ENCODE measurements at regions of chr17 and their contacts with region 1.

Region 1: DNA sequence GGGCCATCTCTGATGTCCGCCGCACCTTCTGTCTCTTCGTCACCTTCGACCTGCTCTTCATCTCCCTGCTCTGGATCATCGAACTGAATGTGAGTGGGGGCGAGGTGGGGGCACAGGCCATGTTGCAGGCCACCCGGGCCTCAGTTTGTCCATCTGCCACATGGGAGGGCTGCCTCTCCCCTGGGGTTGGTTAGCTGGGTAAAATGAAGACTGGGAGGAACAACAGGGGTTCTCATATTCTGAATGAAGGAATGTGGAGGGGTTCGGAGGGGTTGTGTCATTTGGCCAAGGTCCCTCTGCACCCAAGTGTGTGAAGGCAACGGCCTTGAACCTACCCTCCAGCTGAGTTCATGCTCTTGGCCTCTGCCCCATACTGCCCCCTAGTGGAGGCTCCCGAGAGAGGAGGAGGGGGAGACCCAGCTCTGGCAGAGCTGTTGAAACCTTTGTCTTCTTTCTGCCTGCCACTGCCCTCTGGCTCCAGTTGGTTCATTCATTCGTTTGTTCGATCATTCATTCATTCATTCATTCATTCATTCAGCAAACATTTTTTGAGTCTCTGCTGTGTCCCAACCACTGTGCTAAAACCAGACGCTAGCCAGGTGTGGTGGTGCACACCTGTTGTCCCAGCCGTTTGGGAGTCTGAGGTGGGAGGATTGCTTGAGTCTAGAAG is 11.4 kb upstream of the TCAP start:
- DNase-seq: no peak
- ATAC-seq: peak; percentile 98
- H3K4me3 ChIP-seq: no peak overlapping the region
- H3K27ac ChIP-seq: no peak overlapping the region
- H3K4me1 ChIP-seq: peaks cover 5% of the 10 kb centered on the region; the same call in 1 of the 2 replicates
- H3K27me3 ChIP-seq: no peaks in the 10 kb centered on the region
- CTCF ChIP-seq: peak; percentile 74 to 96 (median 96)
- EP300 ChIP-seq: no peak
- POLR2A ChIP-seq: no peak
- RAD21 ChIP-seq: peak; percentile 54

Region 2: GRCh38 chr17:39636927-39637736 is 16.7 kb before region 1 on chr17 and contains the start of gene STARD3:
- CTCF ChIA-PET with region 1: interaction called, 63 read pairs
- POLR2A ChIA-PET with region 1: no interaction called
- RAD21 ChIA-PET with region 1: no interaction called
- SMC1A ChIA-PET with region 1: interaction called, 3 read pairs
- in situ Hi-C with region 1: no loop called
- intact Hi-C with region 1: no loop called
- DNase-seq: no peak
- ATAC-seq: peak; percentile 97
- H3K4me3 ChIP-seq: peak within 1 kb of the TSS; percentile 100
- H3K27ac ChIP-seq: peak within 1 kb of the TSS; percentile 90
- H3K4me1 ChIP-seq: peaks cover 20% of the 10 kb centered on the region
- H3K27me3 ChIP-seq: no peaks in the 10 kb centered on the region
- CTCF ChIP-seq: peak in 1 of 3 experiments; percentile 12; a peak in 2 of 6 replicates
- EP300 ChIP-seq: no peak
- POLR2A ChIP-seq: peak; percentile 91
- RAD21 ChIP-seq: no peak
- polyA plus RNA-seq, gene STARD3: 0.08 to 1.4 TPM

Region 3: GRCh38 chr17:39643271-39643670 is 10.5 kb before region 1 on chr17:
- CTCF ChIA-PET with region 1: interaction called, 63 read pairs
- POLR2A ChIA-PET with region 1: no interaction called
- RAD21 ChIA-PET with region 1: no interaction called
- SMC1A ChIA-PET with region 1: interaction called, 4 read pairs
- in situ Hi-C with region 1: no loop called
- intact Hi-C with region 1: no loop called
- DNase-seq: no peak
- ATAC-seq: no peak
- H3K4me3 ChIP-seq: no peak overlapping the region
- H3K27ac ChIP-seq: no peak overlapping the region
- H3K4me1 ChIP-seq: peaks cover 11% of the 10 kb centered on the region
- H3K27me3 ChIP-seq: no peaks in the 10 kb centered on the region
- CTCF ChIP-seq: no peak
- EP300 ChIP-seq: no peak
- POLR2A ChIP-seq: no peak
- RAD21 ChIP-seq: no peak

Region 4: DNA sequence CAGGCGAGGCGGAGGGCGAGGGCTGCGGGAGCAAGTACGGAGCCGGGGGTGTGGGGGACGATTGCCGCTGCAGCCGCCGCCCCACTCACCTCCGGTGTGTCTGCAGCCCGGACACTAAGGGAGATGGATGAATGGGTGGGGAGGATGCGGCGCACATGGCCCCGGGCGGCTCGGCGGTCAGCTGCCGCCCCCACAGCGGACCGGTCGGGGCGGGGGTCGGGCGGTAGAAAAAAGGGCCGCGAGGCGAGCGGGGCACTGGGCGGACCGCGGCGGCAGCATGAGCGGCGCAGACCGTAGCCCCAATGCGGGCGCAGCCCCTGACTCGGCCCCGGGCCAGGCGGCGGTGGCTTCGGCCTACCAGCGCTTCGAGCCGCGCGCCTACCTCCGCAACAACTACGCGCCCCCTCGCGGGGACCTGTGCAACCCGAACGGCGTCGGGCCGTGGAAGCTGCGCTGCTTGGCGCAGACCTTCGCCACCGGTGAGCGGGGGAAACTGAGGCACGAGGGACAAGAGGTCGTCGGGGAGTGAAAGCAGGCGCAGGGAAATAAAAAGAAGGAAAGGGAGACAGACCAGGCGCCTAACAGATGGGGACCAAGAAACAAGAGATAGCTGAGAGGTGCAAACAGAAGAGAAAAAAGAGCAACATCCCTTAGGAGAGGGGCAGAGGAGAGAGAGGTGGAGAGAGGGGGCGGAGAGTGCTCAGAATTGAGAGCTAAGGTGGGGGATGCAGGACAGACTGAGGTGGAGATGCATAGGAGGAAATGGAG is 14.6 kb after region 1 on chr17 and contains the start of gene PNMT:
- CTCF ChIA-PET with region 1: interaction called, 64 read pairs
- POLR2A ChIA-PET with region 1: interaction called, 3 read pairs
- RAD21 ChIA-PET with region 1: interaction called, 7 read pairs
- SMC1A ChIA-PET with region 1: interaction called, 5 read pairs
- in situ Hi-C with region 1: no loop called
- intact Hi-C with region 1: no loop called
- DNase-seq: no peak
- ATAC-seq: peak; percentile 82
- H3K4me3 ChIP-seq: peak within 1 kb of the TSS; percentile 44; the same call in 1 of the 2 replicates
- H3K27ac ChIP-seq: no peak within 1 kb of the TSS
- H3K4me1 ChIP-seq: no peaks in the 10 kb centered on the region
- H3K27me3 ChIP-seq: peaks cover 4 to 6% of the 10 kb centered on the region in 2 experiments; a peak in 3 of 4 replicates
- CTCF ChIP-seq: peak; percentile 57 to 73 (median 62)
- EP300 ChIP-seq: no peak
- POLR2A ChIP-seq: no peak
- RAD21 ChIP-seq: 0 out of 2 replicates have a peak, but pooled peaks have one; percentile 17
- polyA plus RNA-seq, gene PNMT: not detected

Region 5: GRCh38 chr17:39676198-39676819 is 22.5 kb after region 1 on chr17:
- CTCF ChIA-PET with region 1: interaction called, 64 read pairs
- POLR2A ChIA-PET with region 1: interaction called, 3 read pairs
- RAD21 ChIA-PET with region 1: interaction called, 7 read pairs
- SMC1A ChIA-PET with region 1: interaction called, 5 read pairs
- in situ Hi-C with region 1: no loop called
- intact Hi-C with region 1: no loop called
- DNase-seq: peak; percentile 13
- ATAC-seq: peak; percentile 83
- H3K4me3 ChIP-seq: no peak overlapping the region
- H3K27ac ChIP-seq: no peak overlapping the region
- H3K4me1 ChIP-seq: peaks cover 44% of the 10 kb centered on the region
- H3K27me3 ChIP-seq: no peaks in the 10 kb centered on the region
- CTCF ChIP-seq: no peak
- EP300 ChIP-seq: 0 out of 4 replicates have a peak, but pooled peaks of 1 of the 2 experiments have one; percentile 32
- POLR2A ChIP-seq: no peak
- RAD21 ChIP-seq: no peak

Region 6: GRCh38 chr17:39700148-39700987 is 46.6 kb after region 1 on chr17:
- CTCF ChIA-PET with region 1: interaction called, 11 read pairs
- POLR2A ChIA-PET with region 1: no interaction called
- RAD21 ChIA-PET with region 1: interaction called, 4 read pairs
- SMC1A ChIA-PET with region 1: no interaction called
- in situ Hi-C with region 1: no loop called
- intact Hi-C with region 1: no loop called
- DNase-seq: no peak
- ATAC-seq: no peak
- H3K4me3 ChIP-seq: no peak overlapping the region
- H3K27ac ChIP-seq: no peak overlapping the region
- H3K4me1 ChIP-seq: peaks cover 11% of the 10 kb centered on the region
- H3K27me3 ChIP-seq: peaks cover 0 to 7% of the 10 kb centered on the region in 2 experiments; a peak in 2 of 4 replicates
- CTCF ChIP-seq: no peak
- EP300 ChIP-seq: no peak
- POLR2A ChIP-seq: no peak
- RAD21 ChIP-seq: no peak

Region 7: DNA sequence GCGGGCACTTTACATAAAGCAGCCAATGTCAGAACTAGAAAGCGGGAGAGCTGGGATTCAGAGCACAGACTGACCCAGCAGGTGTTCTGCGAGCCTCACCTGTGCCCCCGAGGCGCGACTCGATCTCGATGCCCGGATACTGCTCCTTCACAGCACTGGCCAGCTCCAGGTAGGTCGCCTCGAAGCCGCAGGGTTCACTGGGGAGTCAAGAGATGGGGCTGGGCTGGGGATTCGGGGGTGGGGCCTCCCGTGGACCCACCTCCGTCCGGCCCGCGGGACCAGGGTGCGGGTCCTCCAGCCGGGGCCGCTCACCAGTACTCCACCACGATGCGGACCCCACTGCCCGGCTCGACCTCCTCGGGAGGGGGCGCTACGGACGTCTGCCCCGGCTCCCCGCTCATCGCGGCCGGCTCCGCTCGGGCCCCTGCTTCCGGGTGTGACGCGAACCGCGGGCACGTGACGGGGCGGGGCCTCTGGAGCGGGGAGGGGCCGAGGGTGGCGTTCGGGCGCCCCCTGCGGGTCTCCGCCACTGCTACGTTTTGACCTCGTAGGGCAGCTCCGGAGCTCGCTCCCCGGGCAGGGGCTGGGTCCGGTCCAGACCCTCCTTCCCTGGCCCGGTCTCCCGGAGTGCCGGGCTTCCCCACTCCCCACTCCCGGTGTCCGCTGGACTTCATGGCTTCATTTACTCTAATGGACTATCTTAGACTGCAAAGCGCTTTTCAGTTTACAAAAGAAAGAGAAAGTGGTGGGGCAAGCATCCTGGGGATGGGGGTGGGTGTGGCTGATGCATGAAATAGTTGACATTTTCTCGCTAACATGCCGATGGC is 76.5 kb after region 1 on chr17 and contains the start of gene MIEN1:
- CTCF ChIA-PET with region 1: interaction called, 53 read pairs
- POLR2A ChIA-PET with region 1: no interaction called
- RAD21 ChIA-PET with region 1: interaction called, 3 read pairs
- SMC1A ChIA-PET with region 1: interaction called, 4 read pairs
- in situ Hi-C with region 1: no loop called
- intact Hi-C with region 1: no loop called
- DNase-seq: peak; percentile 43
- ATAC-seq: peak; percentile 96
- H3K4me3 ChIP-seq: peak within 1 kb of the TSS; percentile 91
- H3K27ac ChIP-seq: peak within 1 kb of the TSS; percentile 88
- H3K4me1 ChIP-seq: peaks cover 3% of the 10 kb centered on the region; the same call in 1 of the 2 replicates
- H3K27me3 ChIP-seq: no peaks in the 10 kb centered on the region
- CTCF ChIP-seq: peak; percentile 71 to 90 (median 85)
- EP300 ChIP-seq: 0 out of 4 replicates have a peak, but pooled peaks of 1 of the 2 experiments have one; percentile 13
- POLR2A ChIP-seq: peak; percentile 98
- RAD21 ChIP-seq: peak; percentile 44
- polyA plus RNA-seq, gene MIEN1: 24.9 to 42.5 TPM

Measured in GM12878 (cell line).